Activated CD4-positive, alpha-beta T cell treated with anti-CD3 and anti-CD28 coated beads for 36 hours (primary cell): ENCODE measurements at regions of chr21 and their contacts with region 1.

Region 1: GRCh38 chr21:34073032-34073869 is at the starts of genes MRPS6 and SLC5A3:
- DNase-seq: peak; percentile 81
- ATAC-seq: peak; percentile 66
- H3K4me3 Mint-ChIP-seq: peak within 1 kb of the TSS; percentile 96
- H3K27ac Mint-ChIP-seq: peak within 1 kb of the TSS; percentile 92
- H3K4me1 Mint-ChIP-seq: peaks cover 38% of the 10 kb centered on the region
- H3K27me3 Mint-ChIP-seq: no peaks in the 10 kb centered on the region
- total RNA-seq, gene MRPS6: 102 to 117 TPM
- total RNA-seq, gene SLC5A3: 18.2 to 22.9 TPM

Region 2: DNA sequence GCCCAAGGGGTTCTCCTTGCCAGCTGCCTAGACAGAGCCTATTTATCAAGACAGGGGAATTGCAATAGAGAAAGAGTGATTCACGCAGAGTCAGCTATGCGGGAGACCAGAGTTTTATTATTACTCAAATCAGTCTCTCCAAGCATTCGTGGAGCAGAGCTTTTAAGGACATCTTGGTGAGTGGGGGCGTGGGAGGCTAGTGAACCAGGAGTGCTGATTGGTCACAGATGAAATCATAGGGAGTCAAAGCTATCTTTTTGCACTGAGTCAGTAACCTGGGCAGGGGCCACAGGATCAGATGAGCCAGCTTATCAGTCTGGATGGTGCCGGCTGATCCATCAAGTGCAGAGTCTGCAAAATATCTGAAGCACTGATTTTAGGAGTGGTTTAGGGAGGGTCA is 64.6 kb before region 1 on chr21:
- CTCF ChIA-PET with region 1: interaction called, 3 read pairs
- POLR2A ChIA-PET with region 1: interaction called, 3 read pairs
- intact Hi-C with region 1: loop called in 1 of 2 experiments (anchors 2 kb)
- DNase-seq: peak; percentile 89
- ATAC-seq: peak; percentile 96
- H3K4me3 Mint-ChIP-seq: no peak overlapping the region
- H3K27ac Mint-ChIP-seq: peak overlapping the region; percentile 44
- H3K4me1 Mint-ChIP-seq: peaks cover 21% of the 10 kb centered on the region
- H3K27me3 Mint-ChIP-seq: no peaks in the 10 kb centered on the region

Region 3: DNA sequence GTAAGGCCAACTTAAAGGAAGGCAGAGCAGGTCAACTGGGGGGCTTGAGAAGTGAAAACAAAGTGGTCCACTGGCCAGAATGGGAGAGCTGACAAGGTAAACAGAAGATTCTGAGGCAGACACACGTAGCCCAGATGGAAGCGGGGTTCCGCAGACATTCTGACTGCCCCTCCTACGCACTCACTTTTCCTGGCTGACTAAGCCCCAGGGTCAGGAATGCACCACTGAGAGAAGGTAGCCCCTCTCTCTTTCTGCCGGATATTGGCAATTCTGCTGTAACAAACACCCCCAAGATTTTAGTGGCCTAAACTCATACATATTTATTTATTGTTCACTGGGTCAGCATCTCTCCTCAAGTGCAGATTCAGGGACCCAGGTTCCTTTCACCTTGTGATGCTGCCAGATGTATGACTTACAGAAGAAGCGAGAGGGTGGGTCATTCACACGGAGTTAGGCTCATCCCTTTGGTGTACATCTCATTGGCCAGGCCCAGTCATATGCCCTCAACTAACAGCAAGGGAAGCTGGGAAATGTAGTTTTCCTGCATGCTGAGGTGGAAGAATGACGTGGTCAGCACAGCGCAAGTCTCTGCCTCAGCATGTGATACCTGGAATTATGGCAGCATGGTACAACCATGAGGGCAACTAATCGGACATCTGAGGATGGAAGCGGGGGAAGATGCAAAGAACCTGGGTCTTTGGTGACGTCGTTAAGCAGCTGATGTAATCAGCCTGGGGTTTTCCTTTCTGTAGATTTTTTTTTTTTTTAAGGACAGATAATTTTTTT is 43.3 kb before region 1 on chr21:
- CTCF ChIA-PET with region 1: no interaction called
- POLR2A ChIA-PET with region 1: no interaction called
- intact Hi-C with region 1: loop called (anchors 1 kb)
- DNase-seq: peak; percentile 76
- ATAC-seq: peak; percentile 97
- H3K4me3 Mint-ChIP-seq: peak overlapping the region; percentile 1
- H3K27ac Mint-ChIP-seq: peak overlapping the region; percentile 89
- H3K4me1 Mint-ChIP-seq: peaks cover 35% of the 10 kb centered on the region
- H3K27me3 Mint-ChIP-seq: no peaks in the 10 kb centered on the region

Region 4: DNA sequence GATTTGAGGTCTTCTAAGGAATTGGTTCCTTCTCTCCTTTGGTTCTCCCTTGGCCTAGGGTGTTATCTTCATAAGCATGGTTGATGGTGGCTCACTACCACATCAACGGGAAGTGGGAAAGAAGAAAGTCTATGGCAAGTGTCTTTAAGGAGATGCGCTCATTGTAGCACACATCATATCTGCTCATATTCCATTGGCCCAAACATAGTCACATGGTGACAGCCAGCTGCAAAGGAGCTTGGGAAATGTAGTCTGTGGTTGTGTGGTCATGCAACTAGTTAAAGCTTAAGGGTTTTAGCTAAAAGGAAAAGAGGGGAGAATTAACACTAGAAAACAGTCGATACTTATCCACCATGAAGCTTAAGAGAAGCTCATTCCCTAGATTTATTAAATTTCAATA is 11.3 kb before region 1 on chr21:
- CTCF ChIA-PET with region 1: interaction called, 3 read pairs
- POLR2A ChIA-PET with region 1: interaction called, 3 read pairs
- intact Hi-C with region 1: loop called in 1 of 2 experiments (anchors 1 kb)
- DNase-seq: peak; percentile 28
- ATAC-seq: peak; percentile 57
- H3K4me3 Mint-ChIP-seq: no peak overlapping the region
- H3K27ac Mint-ChIP-seq: no peak overlapping the region
- H3K4me1 Mint-ChIP-seq: no peaks in the 10 kb centered on the region
- H3K27me3 Mint-ChIP-seq: no peaks in the 10 kb centered on the region

Region 5: DNA sequence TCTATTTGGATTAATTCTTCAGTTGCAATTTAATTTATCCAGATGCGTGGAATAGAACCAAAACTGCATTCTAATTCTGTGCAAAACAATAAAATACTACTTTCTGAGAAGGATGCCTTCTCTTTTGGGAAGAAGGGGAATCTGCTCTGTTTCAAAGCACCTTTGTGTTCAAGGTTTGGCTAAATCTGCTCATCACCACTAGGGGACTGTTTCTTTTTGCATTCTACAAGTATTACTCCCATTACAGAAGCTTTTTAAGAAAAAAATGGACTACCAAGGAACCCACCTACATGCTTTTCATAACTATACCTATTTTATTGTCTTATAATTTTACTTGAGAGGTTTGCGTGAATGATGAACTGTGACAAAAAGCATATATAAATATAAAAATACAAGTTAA is 18.4 kb after region 1 on chr21:
- CTCF ChIA-PET with region 1: interaction called, 29 read pairs
- POLR2A ChIA-PET with region 1: interaction called, 7 read pairs
- intact Hi-C with region 1: no loop called
- DNase-seq: no peak
- ATAC-seq: no peak
- H3K4me3 Mint-ChIP-seq: no peak overlapping the region
- H3K27ac Mint-ChIP-seq: no peak overlapping the region
- H3K4me1 Mint-ChIP-seq: peaks cover 48% of the 10 kb centered on the region
- H3K27me3 Mint-ChIP-seq: no peaks in the 10 kb centered on the region

Region 6: GRCh38 chr21:34129039-34129891 is 56.0 kb after region 1 on chr21:
- CTCF ChIA-PET with region 1: interaction called, 4 read pairs
- POLR2A ChIA-PET with region 1: interaction called, 3 read pairs
- intact Hi-C with region 1: loop called (anchors 1 to 2 kb)
- DNase-seq: peak; percentile 87
- ATAC-seq: peak; percentile 94
- H3K4me3 Mint-ChIP-seq: peak overlapping the region; percentile 60
- H3K27ac Mint-ChIP-seq: peak overlapping the region; percentile 94
- H3K4me1 Mint-ChIP-seq: peaks cover 89% of the 10 kb centered on the region
- H3K27me3 Mint-ChIP-seq: no peaks in the 10 kb centered on the region

Region 7: DNA sequence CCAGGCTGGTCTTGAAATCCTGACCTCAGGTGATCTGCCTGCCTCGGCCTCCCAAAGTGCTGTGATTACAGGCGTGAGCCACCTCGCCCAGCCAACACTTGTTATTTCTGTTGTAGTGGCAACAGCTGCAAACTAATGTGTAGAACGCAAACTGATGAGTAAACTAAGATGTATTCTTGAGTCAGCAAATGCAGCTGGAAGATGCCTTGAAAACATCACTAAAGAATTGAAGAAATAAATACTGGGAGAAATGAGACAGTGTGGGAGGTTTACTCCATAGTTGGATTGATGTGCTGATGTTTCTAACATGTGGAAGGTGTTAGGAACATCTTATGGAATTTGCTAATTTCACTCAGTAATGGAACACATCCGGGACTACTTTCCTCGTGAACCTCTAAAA is 229.3 kb after region 1 on chr21:
- CTCF ChIA-PET with region 1: no interaction called
- POLR2A ChIA-PET with region 1: no interaction called
- intact Hi-C with region 1: no loop called
- DNase-seq: no peak
- ATAC-seq: no peak
- H3K4me3 Mint-ChIP-seq: no peak overlapping the region
- H3K27ac Mint-ChIP-seq: no peak overlapping the region
- H3K4me1 Mint-ChIP-seq: no peaks in the 10 kb centered on the region
- H3K27me3 Mint-ChIP-seq: peaks cover 3% of the 10 kb centered on the region

Region 8: DNA sequence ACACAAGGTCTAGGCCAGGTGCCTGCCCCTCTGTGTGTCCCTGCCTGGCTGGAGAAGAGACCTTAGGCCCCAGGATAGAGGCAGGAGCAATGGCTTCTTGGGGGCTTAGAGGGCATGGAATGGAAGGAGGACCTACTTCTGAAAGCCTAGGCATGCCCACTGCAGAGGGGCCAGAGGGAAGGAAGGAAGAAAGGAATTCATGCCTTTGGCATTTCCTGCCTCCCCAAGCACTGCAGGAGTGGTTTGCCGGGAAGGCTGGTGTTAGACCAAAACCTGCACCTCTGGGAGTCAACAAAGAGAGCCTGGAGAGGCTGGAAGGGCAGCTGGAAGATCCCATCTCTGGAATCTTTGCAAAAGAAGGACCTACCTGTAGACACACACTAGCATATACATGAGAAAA is 239.9 kb after region 1 on chr21:
- CTCF ChIA-PET with region 1: no interaction called
- POLR2A ChIA-PET with region 1: no interaction called
- intact Hi-C with region 1: no loop called
- DNase-seq: no peak
- ATAC-seq: no peak
- H3K4me3 Mint-ChIP-seq: no peak overlapping the region
- H3K27ac Mint-ChIP-seq: no peak overlapping the region
- H3K4me1 Mint-ChIP-seq: no peaks in the 10 kb centered on the region
- H3K27me3 Mint-ChIP-seq: peaks cover 6% of the 10 kb centered on the region

Region 9: DNA sequence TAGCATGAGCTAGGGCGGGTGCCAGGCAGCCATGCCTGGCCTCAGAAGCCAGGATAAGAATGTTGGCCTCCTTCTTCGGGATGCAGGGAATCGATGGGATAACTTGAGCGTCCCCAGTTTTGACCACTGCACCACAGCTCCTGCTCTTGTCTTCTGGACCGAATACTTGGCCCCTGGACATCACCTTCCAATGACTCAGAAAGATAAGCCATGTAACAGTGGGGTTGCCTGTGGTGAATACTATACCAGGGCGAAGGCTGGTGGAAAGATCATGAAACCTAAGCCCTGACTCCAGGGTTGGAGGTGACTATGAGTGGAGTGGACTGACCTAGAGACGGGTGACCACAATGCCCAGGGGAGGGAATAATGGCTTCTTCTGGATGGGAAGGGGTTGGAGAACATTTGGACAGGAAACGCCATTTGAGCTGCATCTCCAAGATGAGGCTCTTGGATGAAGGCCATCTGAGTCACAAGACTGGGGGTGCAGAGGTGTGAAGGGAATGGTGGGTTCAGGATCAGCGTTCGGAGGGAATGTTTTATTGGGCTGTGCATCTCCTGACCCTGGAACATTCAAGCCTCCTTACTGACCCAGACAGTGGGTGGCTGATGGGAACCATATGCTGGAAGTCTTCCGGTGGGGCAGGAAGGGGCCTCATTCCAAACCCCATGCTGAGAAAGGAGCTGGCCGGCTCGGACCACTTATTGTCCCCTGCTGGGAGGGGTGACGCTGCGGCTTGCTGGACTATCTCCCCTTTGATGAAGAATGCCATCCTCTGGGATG is 272.0 kb after region 1 on chr21:
- CTCF ChIA-PET with region 1: no interaction called
- POLR2A ChIA-PET with region 1: no interaction called
- intact Hi-C with region 1: loop called in 1 of 2 experiments (anchors 5 kb)
- DNase-seq: no peak
- ATAC-seq: no peak
- H3K4me3 Mint-ChIP-seq: no peak overlapping the region
- H3K27ac Mint-ChIP-seq: no peak overlapping the region
- H3K4me1 Mint-ChIP-seq: peaks cover 3% of the 10 kb centered on the region
- H3K27me3 Mint-ChIP-seq: no peaks in the 10 kb centered on the region